ENCODE measurements at regions of chr19 and their contacts with region 1.

Region 1: GRCh38 chr19:17747205-17748098 is 3.8 kb upstream of the FCHO1 start:
- DNase-seq: peak; percentile 97
- ATAC-seq: peak; percentile 83
- H3K4me3 Mint-ChIP-seq: peak overlapping the region; percentile 79
- H3K27ac Mint-ChIP-seq: peak overlapping the region; percentile 70
- H3K4me1 Mint-ChIP-seq: peaks cover 59% of the 10 kb centered on the region
- H3K27me3 Mint-ChIP-seq: no peaks in the 10 kb centered on the region
- CTCF ChIP-seq: no peak

Region 2: DNA sequence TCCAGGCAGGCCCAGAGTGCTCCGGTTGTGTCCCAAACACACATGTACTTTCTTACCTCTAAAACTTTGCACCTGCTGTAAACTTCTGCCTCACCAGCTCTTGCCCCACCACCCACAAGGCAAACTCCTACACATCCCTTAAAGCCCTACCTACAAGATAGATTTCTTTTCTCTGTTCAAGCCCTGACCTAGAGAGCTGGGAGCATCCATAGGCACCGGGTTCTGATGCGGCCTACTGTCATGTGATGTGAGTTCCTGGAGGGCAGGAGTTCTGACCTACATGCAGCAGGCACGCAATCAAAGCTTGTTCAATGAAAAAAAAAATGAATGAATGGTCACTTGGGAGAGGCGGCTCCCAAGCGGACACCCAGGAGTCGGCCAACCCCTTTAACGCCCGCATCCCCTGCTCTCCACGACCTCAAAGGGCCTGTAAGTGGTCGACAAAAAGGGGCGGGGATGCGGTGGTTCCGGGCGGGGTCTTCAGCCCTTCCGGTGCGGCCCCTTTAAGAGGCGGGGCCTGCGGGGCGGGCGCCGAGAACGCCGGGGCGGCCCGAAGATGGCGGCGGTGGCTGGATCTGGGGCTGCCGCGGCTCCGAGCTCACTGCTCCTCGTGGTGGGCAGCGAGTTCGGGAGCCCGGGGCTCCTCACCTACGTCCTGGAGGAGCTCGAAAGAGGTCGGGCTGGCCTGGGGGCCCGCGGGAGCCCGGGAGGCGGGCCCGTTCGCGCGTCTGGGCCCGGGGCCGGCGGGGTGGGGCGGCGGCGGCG is 28.3 kb before region 1 on chr19 and contains the start of gene MAP1S:
- CTCF ChIA-PET with region 1: interaction called, 5 read pairs
- POLR2A ChIA-PET with region 1: interaction called, 29 read pairs
- intact Hi-C with region 1: loop called (anchors 1 kb)
- DNase-seq: peak; percentile 74
- ATAC-seq: peak; percentile 91
- H3K4me3 Mint-ChIP-seq: peak within 1 kb of the TSS; percentile 89
- H3K27ac Mint-ChIP-seq: peak within 1 kb of the TSS; percentile 77
- H3K4me1 Mint-ChIP-seq: peaks cover 38% of the 10 kb centered on the region
- H3K27me3 Mint-ChIP-seq: no peaks in the 10 kb centered on the region
- CTCF ChIP-seq: no peak
- total RNA-seq, gene MAP1S: 65.6 and 80.5 TPM in 2 replicates

Region 3: DNA sequence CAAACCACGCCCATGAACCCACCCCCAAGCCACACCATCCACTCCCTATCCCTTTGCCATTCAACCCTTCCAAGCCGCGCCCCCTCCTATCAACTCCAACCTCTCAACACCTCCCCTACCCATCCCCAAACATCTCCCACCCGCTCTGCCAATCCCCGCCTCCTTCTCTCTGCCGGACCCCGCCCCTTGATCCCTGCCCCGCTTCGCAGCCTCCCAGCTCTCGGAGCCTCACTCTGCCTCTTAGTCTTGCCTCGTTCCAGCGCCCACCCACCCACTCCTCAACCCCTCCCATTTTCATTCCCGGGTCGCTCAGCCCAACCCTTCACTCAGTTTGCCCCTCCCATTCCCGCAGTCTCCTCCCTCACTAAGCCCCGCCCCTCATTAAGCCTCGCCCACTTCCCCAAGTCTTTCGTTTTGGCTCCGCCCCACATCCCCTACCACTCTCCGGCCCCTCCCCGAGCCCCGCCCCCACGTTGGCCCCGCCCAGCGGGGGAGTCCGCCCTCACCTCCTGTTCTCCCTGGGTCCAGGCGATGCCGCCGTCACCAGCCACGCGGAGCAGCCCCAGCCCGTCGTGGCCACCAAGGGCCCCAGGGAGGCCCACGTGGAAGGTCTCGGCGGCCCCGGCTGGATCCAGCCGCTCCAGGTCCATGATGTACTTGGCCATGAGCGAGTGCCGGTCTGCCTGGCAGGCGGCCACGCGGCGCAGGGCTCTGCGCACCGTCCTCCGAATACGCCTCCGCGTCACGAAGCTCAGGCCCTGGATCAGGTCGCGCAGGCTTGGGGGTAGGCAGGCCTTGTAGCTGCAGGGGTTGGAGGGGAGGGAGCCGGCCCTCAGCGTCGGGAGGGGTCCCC is 94.6 kb after region 1 on chr19:
- CTCF ChIA-PET with region 1: no interaction called
- POLR2A ChIA-PET with region 1: interaction called, 76 read pairs
- intact Hi-C with region 1: no loop called
- DNase-seq: no peak
- ATAC-seq: peak; percentile 87
- H3K4me3 Mint-ChIP-seq: no peak overlapping the region
- H3K27ac Mint-ChIP-seq: no peak overlapping the region
- H3K4me1 Mint-ChIP-seq: peaks cover 31% of the 10 kb centered on the region
- H3K27me3 Mint-ChIP-seq: no peaks in the 10 kb centered on the region
- CTCF ChIP-seq: no peak

Measured in activated B cell treated with CpG ODN at 0.5 μM for 24 hours (primary cell).